Breast epithelium (tissue), 4 donors: ENCODE measurements at regions of chr7 and their contacts with region 1.

Region 1: GRCh38 chr7:115124409-115124942 is 202.6 kb downstream of the MDFIC start:
- DNase-seq: no peak
- H3K4me3 ChIP-seq: no peak overlapping the region
- H3K27ac ChIP-seq: no peak overlapping the region
- H3K4me1 ChIP-seq: no peaks in the 10 kb centered on the region
- H3K27me3 ChIP-seq: no peaks in the 10 kb centered on the region
- CTCF ChIP-seq: no peak
- POLR2A ChIP-seq: no peak

Region 2: DNA sequence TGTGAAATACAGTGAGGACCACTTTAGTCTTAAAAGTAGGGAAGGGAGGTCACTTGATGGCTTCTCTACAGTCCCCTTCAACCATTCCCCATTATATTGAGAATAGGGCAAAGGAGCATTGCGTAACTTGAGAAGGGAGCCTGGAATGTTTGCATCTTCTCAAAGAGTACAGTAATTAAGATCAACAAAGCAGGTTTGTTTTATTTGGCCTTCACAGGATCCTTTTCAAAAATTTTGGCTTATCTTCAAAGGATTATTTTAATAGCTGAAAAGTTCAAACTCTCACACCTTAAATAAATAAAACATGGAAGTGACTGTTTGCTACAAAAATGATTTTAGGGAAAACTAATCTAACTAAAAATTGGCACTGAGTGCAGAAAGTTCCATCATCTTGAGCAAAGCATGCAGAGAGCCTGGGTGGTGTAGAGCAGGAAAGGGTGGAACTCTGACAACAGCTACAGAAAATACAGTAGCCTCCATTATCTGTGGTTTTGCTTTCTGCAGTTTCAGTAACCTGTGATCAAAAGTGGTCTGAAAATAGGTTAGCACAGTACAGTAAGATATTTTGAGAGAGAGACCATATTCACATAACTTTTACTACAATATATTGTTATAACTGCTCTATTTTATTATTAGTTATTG is 11.4 kb after region 1 on chr7:
- intact Hi-C with region 1: no loop called
- DNase-seq: no peak
- H3K4me3 ChIP-seq: no peak overlapping the region
- H3K27ac ChIP-seq: no peak overlapping the region
- H3K4me1 ChIP-seq: no peaks in the 10 kb centered on the region
- H3K27me3 ChIP-seq: no peaks in the 10 kb centered on the region
- CTCF ChIP-seq: no peak
- POLR2A ChIP-seq: no peak

Region 3: DNA sequence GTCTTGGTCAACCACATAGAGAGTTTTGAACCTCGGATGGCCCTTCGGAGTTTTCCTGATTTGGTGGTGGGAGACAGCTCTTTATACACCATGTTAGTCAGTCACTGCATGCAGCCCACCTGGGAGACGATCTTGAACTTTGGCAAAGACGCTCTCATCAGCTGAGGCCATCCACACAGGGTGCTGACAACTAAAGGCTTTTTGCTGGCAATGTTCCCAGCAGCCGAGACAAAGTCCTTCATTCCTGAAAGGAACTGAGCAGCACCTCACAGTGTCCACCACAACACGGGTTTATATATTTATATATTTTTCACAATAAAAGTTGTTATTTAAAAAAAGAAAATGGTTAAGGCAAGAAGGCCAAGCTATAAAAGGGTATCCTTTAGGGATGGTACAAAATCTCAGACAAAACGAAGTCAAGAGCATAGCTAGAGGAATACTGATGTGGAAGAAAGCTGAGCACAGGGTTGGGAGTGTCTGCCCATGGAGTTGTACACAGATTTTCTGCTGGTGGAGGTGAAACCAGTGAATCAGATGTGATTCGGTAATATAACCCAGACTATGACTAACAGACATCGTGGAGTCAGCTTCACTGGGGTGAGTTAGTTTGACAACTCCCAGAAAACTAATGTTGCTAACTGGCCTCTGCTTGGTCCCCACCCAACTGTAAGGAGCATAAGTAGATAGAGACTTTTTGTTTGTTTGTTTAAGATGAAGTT is 1710.5 kb after region 1 on chr7:
- intact Hi-C with region 1: loop called (anchors 10 kb)
- DNase-seq: no peak
- H3K4me3 ChIP-seq: no peak overlapping the region
- H3K27ac ChIP-seq: no peak overlapping the region
- H3K4me1 ChIP-seq: no peaks in the 10 kb centered on the region
- H3K27me3 ChIP-seq: no peaks in the 10 kb centered on the region
- CTCF ChIP-seq: no peak
- POLR2A ChIP-seq: no peak